Activated CD4-positive, alpha-beta memory T cell treated with anti-CD3 and anti-CD28 coated beads for 36 hours (primary cell): ENCODE measurements at regions of chr1 and their contacts with region 1.

Region 1: DNA sequence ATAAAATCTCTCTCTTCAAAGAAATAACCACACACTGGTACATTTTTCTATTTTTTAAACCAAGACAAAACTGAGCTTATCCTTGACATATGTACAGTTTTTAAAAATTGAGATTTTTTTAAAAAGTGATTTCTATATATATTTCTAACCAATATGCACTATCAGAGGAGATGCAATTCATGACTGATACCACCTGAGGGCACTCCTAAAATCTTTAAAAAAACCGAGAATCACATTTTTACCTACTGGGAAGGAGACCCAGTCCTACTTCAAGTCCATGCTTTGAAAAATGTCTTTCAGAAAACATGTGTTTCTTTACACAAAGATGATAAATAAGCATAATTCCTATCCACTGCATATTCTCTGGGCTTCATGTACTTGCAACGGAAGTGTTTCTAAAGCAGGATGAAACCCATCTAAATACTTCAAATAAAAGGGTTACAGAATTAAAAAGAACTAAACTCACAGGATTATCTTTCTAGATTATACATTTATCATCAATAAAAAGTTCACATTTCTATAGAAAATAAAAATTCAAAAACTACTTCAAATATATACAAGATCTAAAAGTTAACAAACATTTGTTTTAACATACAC is 98.6 kb downstream of the ENAH start:
- DNase-seq: no peak
- H3K4me3 Mint-ChIP-seq: no peak overlapping the region
- H3K27ac Mint-ChIP-seq: no peak overlapping the region
- H3K4me1 Mint-ChIP-seq: no peaks in the 10 kb centered on the region
- H3K27me3 Mint-ChIP-seq: peaks cover 3% of the 10 kb centered on the region

Region 2: GRCh38 chr1:225652729-225653462 is 98.6 kb after region 1 on chr1 and contains the start of gene ENAH:
- CTCF ChIA-PET with region 1: no interaction called
- POLR2A ChIA-PET with region 1: no interaction called
- intact Hi-C with region 1: loop called (anchors 5 kb)
- DNase-seq: peak; percentile 56
- H3K4me3 Mint-ChIP-seq: peak within 1 kb of the TSS; percentile 82
- H3K27ac Mint-ChIP-seq: no peak within 1 kb of the TSS
- H3K4me1 Mint-ChIP-seq: peaks cover 13% of the 10 kb centered on the region
- H3K27me3 Mint-ChIP-seq: peaks cover 24% of the 10 kb centered on the region
- total RNA-seq, gene ENAH: 0.80 to 0.95 TPM

Region 3: GRCh38 chr1:225977937-225978748 is 423.8 kb after region 1 on chr1:
- CTCF ChIA-PET with region 1: interaction called, 3 read pairs
- POLR2A ChIA-PET with region 1: no interaction called
- intact Hi-C with region 1: loop called (anchors 1 kb)
- DNase-seq: no peak
- H3K4me3 Mint-ChIP-seq: no peak overlapping the region
- H3K27ac Mint-ChIP-seq: no peak overlapping the region
- H3K4me1 Mint-ChIP-seq: peaks cover 7% of the 10 kb centered on the region
- H3K27me3 Mint-ChIP-seq: no peaks in the 10 kb centered on the region